CD4-positive, alpha-beta T cell (primary cell): ENCODE measurements at regions of chr3 and their contacts with region 1.

Region 1: DNA sequence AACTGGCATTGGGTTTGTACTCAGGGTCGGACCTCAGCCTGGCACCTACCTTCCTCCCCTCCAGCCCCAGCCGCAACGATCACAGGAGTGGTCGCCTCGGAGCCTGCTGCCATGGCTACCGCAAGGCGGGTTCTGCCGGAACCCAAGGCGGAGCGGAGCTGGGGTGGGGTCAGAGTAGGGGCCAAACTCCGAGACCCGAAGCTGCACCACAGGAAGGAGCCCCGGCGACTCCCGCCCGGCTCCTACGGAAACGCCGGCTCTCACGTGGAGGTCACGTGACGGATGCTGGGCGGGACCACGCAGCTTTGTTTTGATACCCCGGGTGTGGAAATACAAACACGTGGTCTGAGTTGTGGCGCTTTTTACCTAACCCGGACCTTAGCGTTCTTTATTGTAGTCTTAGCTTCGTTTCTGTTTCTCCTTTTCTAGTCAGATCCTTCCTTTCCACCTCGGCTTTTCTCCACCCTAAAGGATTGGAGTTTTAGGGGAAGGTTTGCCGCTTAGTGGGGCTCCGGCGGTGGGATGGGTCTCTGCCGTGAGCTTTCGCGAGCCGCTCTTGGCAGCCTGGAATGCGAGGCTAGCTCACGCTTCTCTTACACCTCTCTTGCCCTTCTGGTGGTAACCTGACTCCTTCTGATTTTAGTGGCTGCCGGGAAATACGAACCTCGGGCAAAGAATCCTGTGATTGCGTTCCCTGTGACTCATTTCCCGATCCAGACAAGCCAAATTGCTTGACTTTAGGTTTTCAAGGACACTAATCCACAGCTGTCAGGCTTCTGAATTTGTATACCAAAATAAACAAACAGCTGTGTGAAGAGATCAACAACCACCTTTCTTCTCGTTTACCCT is at the start of gene HSPBAP1:
- DNase-seq: peak; percentile 76 to 95 (median 86)
- ATAC-seq: peak; percentile 69
- H3K4me3 ChIP-seq: peak within 1 kb of the TSS; percentile 68
- H3K4me3 Mint-ChIP-seq: no peak within 1 kb of the TSS
- H3K27ac ChIP-seq: peak within 1 kb of the TSS; percentile 75 to 84
- H3K27ac Mint-ChIP-seq: no peak within 1 kb of the TSS
- H3K4me1 ChIP-seq: peaks cover 37% of the 10 kb centered on the region
- H3K4me1 Mint-ChIP-seq: peaks cover 37% of the 10 kb centered on the region
- H3K27me3 ChIP-seq: no peaks in the 10 kb centered on the region
- H3K27me3 Mint-ChIP-seq: no peaks in the 10 kb centered on the region
- CTCF ChIP-seq: no peak
- total RNA-seq, gene HSPBAP1: 9.3 to 11.0 TPM

Region 2: DNA sequence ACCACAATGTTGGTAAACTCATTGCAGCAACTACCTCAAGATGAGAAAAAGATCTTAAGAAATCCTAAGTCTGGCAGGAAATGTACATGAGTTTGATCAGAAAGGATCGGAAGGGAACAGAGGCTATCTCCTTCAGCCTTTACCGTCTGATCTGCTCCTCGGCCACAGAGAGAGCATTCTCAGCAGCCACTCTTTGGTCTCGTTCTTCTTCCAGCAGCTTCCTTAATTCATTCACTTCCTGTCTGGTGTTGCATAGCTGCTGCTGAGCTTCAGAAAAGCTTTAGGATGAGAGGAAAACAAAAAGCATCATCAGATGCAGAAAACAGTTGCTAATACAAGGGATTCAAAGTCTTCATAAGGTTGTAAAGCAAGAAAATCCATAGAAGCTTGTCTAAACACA is 1126.5 kb before region 1 on chr3:
- CTCF ChIA-PET with region 1: no interaction called
- POLR2A ChIA-PET with region 1: no interaction called
- intact Hi-C with region 1: loop called in 1 of 2 experiments (anchors 5 kb)
- DNase-seq: peak in 1 of 14 experiments; percentile 8
- ATAC-seq: no peak
- H3K4me3 ChIP-seq: no peak overlapping the region
- H3K4me3 Mint-ChIP-seq: no peak overlapping the region
- H3K27ac ChIP-seq: no peak overlapping the region
- H3K27ac Mint-ChIP-seq: no peak overlapping the region
- H3K4me1 ChIP-seq: no peaks in the 10 kb centered on the region
- H3K4me1 Mint-ChIP-seq: no peaks in the 10 kb centered on the region
- H3K27me3 ChIP-seq: no peaks in the 10 kb centered on the region
- H3K27me3 Mint-ChIP-seq: no peaks in the 10 kb centered on the region
- CTCF ChIP-seq: no peak

Region 3: DNA sequence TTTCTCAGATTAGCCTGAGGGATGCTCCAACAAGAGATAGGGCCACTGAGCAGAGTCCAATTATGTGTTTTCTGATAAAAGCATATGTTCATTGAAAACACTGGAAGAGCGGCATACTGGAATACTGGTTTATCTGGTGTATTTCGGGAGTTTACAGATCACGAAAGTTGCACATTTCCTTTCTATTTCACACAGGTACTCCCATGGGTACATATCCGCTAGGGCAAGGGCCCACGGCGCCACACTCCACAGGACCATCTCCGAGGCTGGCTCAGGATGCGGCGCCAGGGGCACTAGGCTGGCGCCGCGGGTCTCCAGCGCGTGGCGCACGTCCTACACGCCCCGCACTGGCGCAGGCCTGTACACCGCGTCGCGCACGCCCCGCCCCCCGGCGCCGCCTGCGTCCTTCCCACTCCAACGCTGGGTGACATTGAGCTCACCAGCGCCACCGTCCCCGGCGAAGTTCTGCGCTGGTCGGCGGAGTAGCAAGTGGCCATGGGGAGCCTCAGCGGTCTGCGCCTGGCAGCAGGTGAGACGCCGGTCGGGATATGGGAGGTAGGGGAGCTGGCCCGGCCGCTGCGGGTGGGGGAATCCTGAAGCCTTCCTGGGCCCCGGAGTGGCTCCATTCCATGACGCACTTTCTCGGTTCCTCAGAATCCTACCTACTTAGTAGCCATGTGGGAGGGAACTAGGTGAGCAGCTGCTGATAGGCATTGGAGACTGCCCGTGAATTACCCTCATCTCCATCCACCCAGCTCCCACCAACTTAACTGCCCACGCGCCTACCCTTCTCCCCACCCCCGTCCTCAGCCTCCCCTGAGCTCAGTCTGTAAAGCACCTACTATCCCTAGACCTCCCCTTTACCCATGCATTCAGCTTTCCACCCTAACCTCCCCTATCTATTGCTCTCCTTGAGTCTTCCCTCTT is 409.8 kb before region 1 on chr3 and contains the start of gene FAM162A:
- CTCF ChIA-PET with region 1: interaction called, 4 read pairs
- POLR2A ChIA-PET with region 1: interaction called, 20 read pairs
- intact Hi-C with region 1: loop called in 1 of 2 experiments (anchors 10 kb)
- DNase-seq: peak; percentile 87 to 98 (median 92)
- ATAC-seq: peak; percentile 94
- H3K4me3 ChIP-seq: peak within 1 kb of the TSS; percentile 76
- H3K4me3 Mint-ChIP-seq: peak within 1 kb of the TSS; percentile 94
- H3K27ac ChIP-seq: peak within 1 kb of the TSS; percentile 61 to 71
- H3K27ac Mint-ChIP-seq: peak within 1 kb of the TSS; percentile 87
- H3K4me1 ChIP-seq: peaks cover 17% of the 10 kb centered on the region
- H3K4me1 Mint-ChIP-seq: peaks cover 54% of the 10 kb centered on the region
- H3K27me3 ChIP-seq: no peaks in the 10 kb centered on the region
- H3K27me3 Mint-ChIP-seq: no peaks in the 10 kb centered on the region
- CTCF ChIP-seq: peak; percentile 71
- total RNA-seq, gene FAM162A: 32.8 to 34.6 TPM

Region 4: GRCh38 chr3:122514123-122515019 is 279.4 kb before region 1 on chr3 and contains the start of gene KPNA1:
- CTCF ChIA-PET with region 1: no interaction called
- POLR2A ChIA-PET with region 1: interaction called, 3 read pairs
- intact Hi-C with region 1: loop called in 1 of 2 experiments (anchors 2 kb)
- DNase-seq: peak; percentile 70 to 95 (median 82)
- ATAC-seq: peak; percentile 85
- H3K4me3 ChIP-seq: peak within 1 kb of the TSS; percentile 68
- H3K4me3 Mint-ChIP-seq: peak within 1 kb of the TSS; percentile 89
- H3K27ac ChIP-seq: peak within 1 kb of the TSS; percentile 83 to 97
- H3K27ac Mint-ChIP-seq: peak within 1 kb of the TSS; percentile 82
- H3K4me1 ChIP-seq: peaks cover 17% of the 10 kb centered on the region
- H3K4me1 Mint-ChIP-seq: peaks cover 44% of the 10 kb centered on the region
- H3K27me3 ChIP-seq: no peaks in the 10 kb centered on the region
- H3K27me3 Mint-ChIP-seq: no peaks in the 10 kb centered on the region
- CTCF ChIP-seq: no peak
- total RNA-seq, gene KPNA1: 46.2 to 49.8 TPM

Region 5: DNA sequence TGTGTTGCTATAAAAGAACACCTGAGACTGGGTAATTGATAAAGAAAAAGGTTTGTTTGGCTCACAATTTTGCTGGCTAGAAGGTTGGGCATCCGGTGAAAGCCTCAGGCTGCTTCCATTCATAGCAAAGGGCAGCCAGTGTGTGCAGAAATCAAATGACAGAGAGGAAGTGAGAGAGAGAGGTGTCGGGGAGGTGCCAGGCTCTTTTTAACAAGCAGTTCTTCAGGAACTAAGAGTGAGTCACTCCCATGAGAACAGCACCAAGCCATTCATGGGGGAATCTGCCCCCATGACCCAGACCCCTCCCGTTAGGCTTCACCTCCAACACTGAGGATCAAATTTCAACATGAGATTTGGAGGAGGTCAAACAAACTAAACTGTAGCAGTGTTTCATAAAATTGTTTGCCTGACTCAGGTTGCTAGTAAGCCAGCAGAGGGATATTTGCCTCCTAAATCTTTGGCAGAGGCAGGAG is 220.8 kb before region 1 on chr3:
- CTCF ChIA-PET with region 1: no interaction called
- POLR2A ChIA-PET with region 1: no interaction called
- intact Hi-C with region 1: loop called in 1 of 2 experiments (anchors 5 kb)
- DNase-seq: peak in 7 of 14 experiments; percentile 4 to 74 (median 43)
- ATAC-seq: no peak
- H3K4me3 ChIP-seq: no peak overlapping the region
- H3K4me3 Mint-ChIP-seq: peak overlapping the region; percentile 50
- H3K27ac ChIP-seq: peak overlapping the region in 1 of 2 donors; percentile 38
- H3K27ac Mint-ChIP-seq: peak overlapping the region; percentile 67
- H3K4me1 ChIP-seq: peaks cover 37% of the 10 kb centered on the region
- H3K4me1 Mint-ChIP-seq: peaks cover 65% of the 10 kb centered on the region
- H3K27me3 ChIP-seq: no peaks in the 10 kb centered on the region
- H3K27me3 Mint-ChIP-seq: no peaks in the 10 kb centered on the region
- CTCF ChIP-seq: no peak

Region 6: DNA sequence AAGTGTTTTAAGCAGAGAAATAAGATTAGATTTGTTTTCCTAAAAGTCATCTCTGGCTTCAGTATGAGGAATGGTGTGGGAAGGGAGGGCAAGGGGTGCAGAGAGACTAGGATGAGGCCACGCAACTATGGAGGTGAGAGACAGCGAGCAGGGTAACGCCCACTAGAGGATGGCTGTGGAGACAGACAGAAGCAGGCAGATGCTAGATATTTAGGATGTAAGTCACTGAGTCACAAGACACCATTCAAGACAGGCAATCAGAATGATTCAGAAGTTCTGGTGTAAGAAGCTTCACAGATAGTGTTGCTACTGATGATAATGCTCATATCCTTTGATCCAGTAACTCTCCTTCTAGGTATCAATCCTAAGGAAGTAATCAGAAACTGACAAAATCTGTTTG is 19.2 kb before region 1 on chr3:
- CTCF ChIA-PET with region 1: no interaction called
- POLR2A ChIA-PET with region 1: interaction called, 10 read pairs
- intact Hi-C with region 1: no loop called
- DNase-seq: peak in 1 of 14 experiments; percentile 39
- ATAC-seq: no peak
- H3K4me3 ChIP-seq: no peak overlapping the region
- H3K4me3 Mint-ChIP-seq: no peak overlapping the region
- H3K27ac ChIP-seq: no peak overlapping the region
- H3K27ac Mint-ChIP-seq: no peak overlapping the region
- H3K4me1 ChIP-seq: no peaks in the 10 kb centered on the region
- H3K4me1 Mint-ChIP-seq: no peaks in the 10 kb centered on the region
- H3K27me3 ChIP-seq: no peaks in the 10 kb centered on the region
- H3K27me3 Mint-ChIP-seq: no peaks in the 10 kb centered on the region
- CTCF ChIP-seq: no peak

Region 7: DNA sequence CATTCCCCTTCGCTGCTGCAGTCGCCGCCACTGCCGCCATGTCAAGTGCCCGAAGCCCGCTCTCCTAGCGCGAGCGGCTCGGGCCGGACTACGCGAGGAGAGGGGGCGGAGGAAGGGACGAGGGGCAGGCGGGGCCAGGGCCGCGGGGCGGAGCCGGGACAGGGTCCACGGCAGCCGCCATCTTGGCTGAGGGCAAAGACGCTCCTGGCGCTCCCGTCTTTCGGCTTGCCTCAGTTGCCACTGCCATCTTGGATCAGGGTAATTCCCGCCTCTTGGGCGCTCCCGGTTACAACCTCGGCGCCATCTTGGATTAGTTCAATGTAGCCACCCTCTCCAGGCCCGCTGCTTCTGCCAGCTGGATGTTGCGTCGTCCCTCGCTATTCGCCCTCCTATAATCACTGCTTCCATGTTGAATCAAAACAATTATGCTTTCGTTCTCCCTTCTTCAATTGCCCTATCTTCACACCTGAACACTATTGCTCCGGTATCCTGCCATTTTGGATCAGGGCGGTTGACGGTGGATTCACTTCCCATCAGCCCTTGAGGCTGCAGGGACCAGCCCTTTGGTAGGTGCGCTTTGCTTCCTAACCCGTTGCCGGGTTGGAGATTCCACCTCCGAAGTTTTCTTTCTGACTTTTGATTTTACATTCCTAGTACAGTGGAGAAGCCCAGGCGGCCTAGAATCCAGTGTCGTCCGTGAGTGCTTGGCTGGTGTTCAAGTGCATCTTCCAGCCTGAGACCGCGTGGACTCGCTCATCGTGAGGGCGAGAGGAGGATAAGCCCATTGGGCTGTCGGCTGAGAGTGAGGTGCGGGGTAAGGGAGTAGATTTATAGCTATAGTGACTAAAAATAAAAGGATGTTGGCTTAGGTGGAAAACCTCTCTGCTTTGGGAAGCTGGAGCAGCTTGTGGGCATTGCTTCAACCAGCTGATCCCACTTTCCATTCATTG is 791.5 kb after region 1 on chr3 and contains the start of gene HACD2:
- CTCF ChIA-PET with region 1: no interaction called
- POLR2A ChIA-PET with region 1: no interaction called
- intact Hi-C with region 1: loop called in 1 of 2 experiments (anchors 5 kb)
- DNase-seq: peak; percentile 85 to 98 (median 92)
- ATAC-seq: peak; percentile 93
- H3K4me3 ChIP-seq: peak within 1 kb of the TSS; percentile 79
- H3K4me3 Mint-ChIP-seq: peak within 1 kb of the TSS; percentile 95
- H3K27ac ChIP-seq: peak within 1 kb of the TSS; percentile 84 to 92
- H3K27ac Mint-ChIP-seq: peak within 1 kb of the TSS; percentile 89
- H3K4me1 ChIP-seq: peaks cover 16% of the 10 kb centered on the region
- H3K4me1 Mint-ChIP-seq: peaks cover 25% of the 10 kb centered on the region
- H3K27me3 ChIP-seq: no peaks in the 10 kb centered on the region
- H3K27me3 Mint-ChIP-seq: no peaks in the 10 kb centered on the region
- CTCF ChIP-seq: no peak
- total RNA-seq, gene HACD2: 12.1 to 13.3 TPM